ENCODE measurements at regions of chr3 and their contacts with region 1.

Region 1: DNA sequence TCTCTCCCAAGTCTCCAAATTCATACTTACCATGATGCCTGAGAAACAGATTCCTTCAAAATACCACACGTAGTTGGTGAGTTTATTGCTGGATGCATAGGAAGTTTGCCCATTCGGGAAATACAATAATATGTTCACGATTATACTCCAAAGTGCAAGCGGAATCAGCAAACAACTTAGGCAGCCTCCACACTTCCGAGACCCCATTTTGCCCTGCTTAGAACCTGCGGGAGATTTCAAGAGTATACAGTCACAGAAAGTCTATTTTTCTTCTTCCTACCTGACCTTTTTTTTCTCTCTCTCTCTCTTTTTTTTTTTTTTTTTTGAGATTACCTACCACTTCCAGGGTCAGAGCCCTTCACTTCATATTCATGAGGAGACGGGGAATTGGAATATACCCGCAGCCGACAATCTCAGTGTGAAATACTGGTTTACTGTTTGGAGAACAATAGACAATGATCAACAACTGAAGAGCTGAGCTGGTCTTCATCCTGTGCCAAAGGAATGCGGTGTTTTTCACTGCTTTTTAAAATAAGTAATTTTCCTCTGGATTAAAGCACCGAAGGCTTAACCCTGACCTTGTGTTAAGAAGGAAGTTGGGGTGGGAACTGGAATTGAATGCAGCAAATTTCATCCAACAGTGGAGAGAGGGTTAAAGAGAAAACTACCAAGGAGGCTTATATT is at the start of gene TM4SF18:
- DNase-seq: peak in 1 of 2 experiments; percentile 36
- ATAC-seq: peak; percentile 26 to 62; a peak in 5 of 6 replicates
- H3K4me3 ChIP-seq: peak within 1 kb of the TSS; percentile 39
- H3K27ac ChIP-seq: peak within 1 kb of the TSS; percentile 91
- H3K4me1 ChIP-seq: peaks cover 67% of the 10 kb centered on the region
- CTCF ChIP-seq: no peak
- EP300 ChIP-seq: no peak
- POLR2A ChIP-seq: no peak
- RAD21 ChIP-seq: no peak
- polyA plus RNA-seq, gene TM4SF18: 99.8 and 123 TPM in 2 replicates

Region 2: DNA sequence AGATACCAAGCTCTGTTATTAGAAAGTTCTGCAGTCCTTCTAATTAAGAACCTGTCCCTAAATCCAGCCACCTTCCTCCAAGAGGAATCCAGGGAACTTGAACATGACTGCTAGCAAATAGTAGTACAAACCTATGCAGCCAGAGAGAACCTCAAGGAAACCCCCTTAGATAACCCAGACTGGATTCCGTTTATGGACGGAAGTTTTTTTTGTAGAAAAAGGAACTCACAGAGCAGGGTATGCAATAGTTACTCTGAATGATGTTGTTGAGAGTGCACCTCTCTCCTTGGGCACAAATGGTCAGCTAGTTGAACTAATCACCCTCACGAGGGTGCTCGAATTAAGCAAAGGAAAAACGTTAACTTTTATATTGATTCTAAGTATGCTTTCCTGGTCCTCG is 40.7 kb before region 1 on chr3:
- CTCF ChIA-PET with region 1: interaction called, 14 read pairs
- POLR2A ChIA-PET with region 1: interaction called, 8 read pairs
- DNase-seq: no peak
- ATAC-seq: no peak
- H3K4me3 ChIP-seq: no peak overlapping the region
- H3K27ac ChIP-seq: peak overlapping the region in 1 of 2 experiments; percentile 87; a peak in 3 of 6 replicates
- H3K4me1 ChIP-seq: peaks cover 11% of the 10 kb centered on the region
- CTCF ChIP-seq: no peak
- EP300 ChIP-seq: no peak
- POLR2A ChIP-seq: no peak
- RAD21 ChIP-seq: no peak

Region 3: DNA sequence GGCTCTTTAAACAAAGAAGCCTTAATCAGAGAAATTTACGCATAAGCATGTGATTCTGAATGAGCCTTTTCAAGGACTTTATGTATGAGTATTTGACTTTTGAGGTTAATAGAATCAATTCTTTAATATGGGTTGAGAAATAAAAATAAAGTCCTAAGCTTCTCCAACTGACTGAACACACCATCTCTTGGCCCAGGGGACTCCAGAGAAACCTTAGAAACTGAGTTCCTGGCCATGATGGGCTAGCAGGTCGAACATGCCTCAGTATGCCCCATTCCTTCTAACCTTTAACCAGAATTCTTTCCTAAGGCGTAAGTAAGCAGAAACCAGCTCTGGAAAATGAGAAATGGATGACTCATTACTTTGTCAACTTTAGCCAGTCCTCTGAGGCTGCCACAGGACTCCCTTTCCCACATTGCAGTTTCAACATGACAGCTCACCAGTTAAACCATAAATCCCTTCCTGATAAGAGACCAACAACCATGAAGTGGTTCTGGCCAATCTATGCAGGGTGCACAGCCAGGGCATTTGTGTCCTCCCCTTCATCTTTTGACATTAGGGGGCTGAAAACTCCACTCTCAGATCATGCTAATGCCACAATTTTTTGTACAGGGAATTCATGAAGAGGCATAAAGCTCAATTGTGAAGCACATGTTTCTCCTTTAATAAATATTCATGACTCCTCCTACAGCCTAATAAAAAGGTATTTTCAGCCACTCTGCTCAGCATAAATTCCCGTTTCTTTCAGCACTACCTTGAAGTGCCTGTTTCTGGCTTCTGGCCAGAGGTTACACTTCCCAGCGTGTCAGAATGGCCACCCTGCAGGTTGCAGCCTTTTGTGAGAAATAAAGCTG is 33.2 kb before region 1 on chr3:
- CTCF ChIA-PET with region 1: interaction called, 13 read pairs
- POLR2A ChIA-PET with region 1: interaction called, 8 read pairs
- DNase-seq: peak; percentile 65 to 98
- ATAC-seq: peak; percentile 91
- H3K4me3 ChIP-seq: no peak overlapping the region
- H3K27ac ChIP-seq: peak overlapping the region; percentile 91 to 95
- H3K4me1 ChIP-seq: peaks cover 49% of the 10 kb centered on the region
- CTCF ChIP-seq: no peak
- EP300 ChIP-seq: peak; percentile 55 to 88; a peak in 3 of 5 replicates
- POLR2A ChIP-seq: no peak
- RAD21 ChIP-seq: peak in 1 of 2 experiments; percentile 46; a peak in 4 of 5 replicates

Region 4: GRCh38 chr3:149314807-149315578 is 18.3 kb before region 1 on chr3:
- CTCF ChIA-PET with region 1: interaction called, 21 read pairs
- POLR2A ChIA-PET with region 1: interaction called, 3 read pairs
- DNase-seq: peak in 1 of 2 experiments; percentile 62
- ATAC-seq: peak; percentile 81 to 83
- H3K4me3 ChIP-seq: no peak overlapping the region
- H3K27ac ChIP-seq: peak overlapping the region; percentile 85 to 90
- H3K4me1 ChIP-seq: peaks cover 46% of the 10 kb centered on the region
- CTCF ChIP-seq: no peak
- EP300 ChIP-seq: no peak
- POLR2A ChIP-seq: no peak
- RAD21 ChIP-seq: 0 out of 5 replicates have a peak, but pooled peaks of 1 of the 2 experiments have one; percentile 19

Region 5: DNA sequence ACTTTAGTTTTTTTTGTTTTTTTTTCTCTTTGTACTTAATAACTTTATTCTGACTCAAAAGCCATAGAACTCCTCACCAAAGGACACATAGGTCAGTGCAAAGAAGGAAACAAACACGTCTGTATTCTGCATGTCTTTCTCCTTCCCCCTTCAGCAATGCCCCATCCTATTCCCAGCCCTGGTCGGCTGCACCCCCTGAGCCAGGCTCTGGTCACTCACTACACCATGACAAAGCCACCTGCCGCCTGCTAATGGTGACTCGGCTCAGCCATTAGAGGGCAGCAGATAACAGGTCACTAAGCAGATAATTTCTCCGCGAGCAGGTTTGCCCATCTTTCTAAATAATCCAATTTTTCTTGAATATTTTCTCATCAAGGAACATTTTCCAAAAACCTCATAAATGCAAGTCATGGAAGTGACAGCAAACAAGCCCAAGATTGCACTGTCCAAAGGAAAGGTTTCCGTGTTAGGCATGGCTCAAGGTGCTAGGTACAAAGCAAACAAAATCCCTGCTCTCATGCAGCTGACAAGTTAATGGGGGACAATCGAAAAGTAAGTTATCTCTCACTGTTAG is 179.0 kb after region 1 on chr3:
- CTCF ChIA-PET with region 1: no interaction called
- POLR2A ChIA-PET with region 1: no interaction called
- DNase-seq: peak; percentile 78 to 82
- ATAC-seq: peak; percentile 86 to 87
- H3K4me3 ChIP-seq: no peak overlapping the region
- H3K27ac ChIP-seq: peak overlapping the region; percentile 54 to 58; a peak in 5 of 6 replicates
- H3K4me1 ChIP-seq: peaks cover 14% of the 10 kb centered on the region; the same call in 2 of the 3 replicates
- CTCF ChIP-seq: peak; percentile 94
- EP300 ChIP-seq: no peak
- POLR2A ChIP-seq: no peak
- RAD21 ChIP-seq: peak; percentile 97

Measured in A549 (cell line).